Right ventricle myocardium superior (tissue), 1 donor: ENCODE measurements at regions of chr4 and their contacts with region 1.

Region 1: GRCh38 chr4:70651864-70652506 is 14.3 kb downstream of the JCHAIN start:
- DNase-seq: no peak
- ATAC-seq: no peak

Region 2: DNA sequence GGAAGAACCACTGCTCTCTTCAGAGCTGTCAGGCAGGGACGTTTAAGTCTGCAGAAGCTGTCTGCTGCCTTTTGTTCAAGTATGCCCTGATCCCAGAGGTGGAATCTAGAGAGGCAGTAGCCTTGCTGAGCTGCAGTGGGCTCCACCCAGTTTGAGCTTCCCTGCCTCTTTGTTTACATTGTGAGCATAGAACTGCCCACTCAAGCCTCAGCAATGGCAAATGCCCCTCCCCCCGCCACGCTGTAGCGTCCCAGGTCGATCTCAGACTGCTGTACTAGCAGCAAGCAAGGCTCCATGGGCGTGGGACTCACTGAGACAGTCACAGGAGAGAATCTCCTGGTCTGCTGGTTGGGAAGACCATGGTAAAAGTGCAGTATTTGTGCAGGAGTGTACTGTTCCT is 214.8 kb before region 1 on chr4:
- intact Hi-C with region 1: no loop called
- DNase-seq: peak; percentile 38
- ATAC-seq: no peak

Region 3: GRCh38 chr4:70473679-70474078 is 178.3 kb before region 1 on chr4:
- intact Hi-C with region 1: no loop called
- DNase-seq: no peak
- ATAC-seq: no peak

Region 4: DNA sequence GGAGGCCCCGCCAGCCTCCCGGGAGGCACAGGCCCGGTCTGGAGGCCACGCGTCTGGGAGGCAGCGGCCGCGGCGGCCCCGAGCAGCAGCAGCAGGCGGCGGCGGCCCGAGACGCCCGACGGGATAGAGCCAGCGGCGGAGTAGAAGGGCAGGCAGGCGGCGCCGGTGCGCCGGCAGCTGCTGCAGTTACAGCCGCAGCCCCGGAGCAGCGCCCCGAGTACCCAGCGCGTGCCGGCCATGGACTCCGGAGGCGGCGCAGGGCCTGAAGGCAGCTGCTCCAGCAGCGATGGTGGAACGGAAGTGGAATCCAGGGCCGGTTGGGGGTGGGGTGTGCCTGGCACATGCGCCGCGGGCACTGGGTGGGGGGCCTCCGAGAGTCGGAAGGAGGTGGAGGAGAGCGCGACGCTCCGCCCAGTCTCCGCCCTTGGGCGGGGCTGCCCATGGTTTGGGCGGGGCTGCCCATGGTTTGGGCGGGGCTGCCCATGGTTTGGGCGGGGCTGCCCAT is 187.7 kb after region 1 on chr4 and contains the start of gene GRSF1:
- intact Hi-C with region 1: no loop called
- DNase-seq: peak; percentile 95
- ATAC-seq: peak; percentile 94
- total RNA-seq, gene GRSF1: 105 TPM

Region 5: GRCh38 chr4:70958681-70959080 is 306.7 kb after region 1 on chr4:
- intact Hi-C with region 1: no loop called
- DNase-seq: no peak
- ATAC-seq: no peak

Region 6: DNA sequence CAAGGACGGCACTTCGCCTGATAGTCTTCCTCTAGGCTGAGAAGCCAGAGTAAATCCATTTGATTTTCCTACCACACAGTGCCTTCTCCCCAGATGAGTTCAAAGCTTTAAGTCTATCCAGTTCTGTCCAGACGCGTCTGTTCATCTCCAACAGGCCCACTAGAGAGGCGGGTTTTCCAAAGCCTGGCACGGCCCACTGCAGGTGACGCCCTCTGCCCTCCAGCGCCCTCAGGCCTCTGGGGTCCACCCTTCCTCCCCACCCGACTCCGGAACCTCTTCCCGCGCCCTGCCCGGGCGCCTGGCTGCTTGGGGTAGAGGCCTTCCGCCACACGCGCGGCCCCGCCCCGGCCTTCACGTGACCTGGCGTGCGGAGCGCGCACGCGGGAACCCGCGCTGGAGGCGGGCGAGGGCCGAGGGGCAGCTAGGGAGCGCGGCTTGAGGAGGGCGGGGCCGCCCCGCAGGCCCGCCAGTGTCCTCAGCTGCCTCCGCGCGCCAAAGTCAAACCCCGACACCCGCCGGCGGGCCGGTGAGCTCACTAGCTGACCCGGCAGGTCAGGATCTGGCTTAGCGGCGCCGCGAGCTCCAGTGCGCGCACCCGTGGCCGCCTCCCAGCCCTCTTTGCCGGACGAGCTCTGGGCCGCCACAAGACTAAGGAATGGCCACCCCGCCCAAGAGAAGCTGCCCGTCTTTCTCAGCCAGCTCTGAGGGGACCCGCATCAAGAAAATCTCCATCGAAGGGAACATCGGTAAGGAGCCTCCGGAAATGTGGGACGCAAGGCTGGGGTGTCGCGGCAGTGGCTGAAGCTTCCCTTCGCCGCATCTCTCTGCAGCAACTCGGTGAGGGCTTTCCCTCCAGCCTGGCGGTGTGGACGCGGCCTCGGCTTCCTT is 341.4 kb after region 1 on chr4 and contains the start of gene DCK:
- intact Hi-C with region 1: loop called (anchors 10 kb)
- DNase-seq: peak; percentile 96
- ATAC-seq: peak; percentile 100
- total RNA-seq, gene DCK: 6.4 TPM

Region 7: DNA sequence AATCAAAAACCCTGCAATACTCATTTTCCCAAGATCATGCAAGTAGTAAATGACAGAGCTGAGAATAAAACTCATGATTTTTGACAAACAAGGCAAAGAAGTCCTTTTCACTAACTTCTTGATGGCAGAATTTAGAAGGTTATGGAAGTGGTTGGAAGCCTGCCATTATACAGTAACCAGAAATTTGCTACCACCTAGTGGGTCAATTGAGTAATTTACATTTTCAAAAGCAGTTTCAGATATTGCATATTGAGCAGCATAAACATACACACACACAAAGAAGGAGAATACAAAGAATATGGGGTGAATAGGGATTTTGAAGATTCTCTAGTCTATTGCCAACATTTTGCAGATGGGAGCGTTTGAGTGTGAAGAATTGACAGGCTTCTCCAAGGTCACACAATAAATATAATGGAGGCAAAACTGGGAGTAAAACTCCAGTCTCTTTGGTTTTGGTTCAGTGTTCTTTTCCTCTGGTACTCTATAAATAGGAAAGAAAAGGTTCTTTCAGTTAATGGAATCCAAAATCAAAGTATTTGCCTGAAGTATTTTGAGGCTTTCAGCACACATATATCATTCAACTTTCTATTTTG is 1061.7 kb after region 1 on chr4:
- intact Hi-C with region 1: loop called (anchors 5 kb)
- DNase-seq: no peak
- ATAC-seq: peak; percentile 51